Endothelial cell of umbilical vein (primary cell): ENCODE measurements at regions of chr19 and their contacts with region 1.

Region 1: DNA sequence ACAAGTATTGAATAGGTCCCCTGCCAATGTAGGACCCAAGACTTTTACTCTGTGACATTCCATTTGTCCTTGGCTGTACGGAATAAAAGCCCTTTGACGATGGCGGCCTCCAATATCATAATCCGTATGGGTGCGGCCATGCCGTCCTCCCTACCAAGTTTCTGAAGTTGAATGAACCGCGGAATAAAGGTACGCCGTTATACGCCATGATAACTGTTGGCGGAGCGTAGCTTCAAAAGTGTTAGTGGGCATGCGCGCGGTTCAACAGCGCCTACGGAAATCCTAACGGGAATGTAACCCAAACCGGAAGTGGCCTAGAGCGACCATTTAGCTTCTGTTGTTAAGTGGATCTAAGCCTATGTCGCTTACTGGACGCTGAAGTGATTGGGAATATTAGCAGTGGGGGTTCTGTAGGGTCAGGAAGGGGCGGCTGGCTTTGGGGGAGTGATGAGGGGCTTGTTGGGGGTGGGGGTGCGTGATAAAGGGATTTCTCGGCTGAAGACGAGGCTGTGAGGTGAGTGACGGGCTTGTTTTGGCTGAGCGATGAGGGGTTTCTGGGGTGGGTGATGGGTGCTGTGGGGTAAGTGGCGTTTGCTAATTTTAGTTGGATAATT is at the start of gene ZNF175:
- DNase-seq: peak; percentile 100
- H3K4me3 ChIP-seq: peak within 1 kb of the TSS; percentile 49 to 85 (median 53)
- H3K27ac ChIP-seq: peak within 1 kb of the TSS; percentile 95
- H3K4me1 ChIP-seq: peaks cover 33% of the 10 kb centered on the region
- H3K27me3 ChIP-seq: peaks cover 6 to 25% of the 10 kb centered on the region in 2 experiments
- CTCF ChIP-seq: no peak
- POLR2A ChIP-seq: peak; percentile 58
- total RNA-seq, gene ZNF175: 16.5 and 21.4 TPM in 2 replicates

Region 2: DNA sequence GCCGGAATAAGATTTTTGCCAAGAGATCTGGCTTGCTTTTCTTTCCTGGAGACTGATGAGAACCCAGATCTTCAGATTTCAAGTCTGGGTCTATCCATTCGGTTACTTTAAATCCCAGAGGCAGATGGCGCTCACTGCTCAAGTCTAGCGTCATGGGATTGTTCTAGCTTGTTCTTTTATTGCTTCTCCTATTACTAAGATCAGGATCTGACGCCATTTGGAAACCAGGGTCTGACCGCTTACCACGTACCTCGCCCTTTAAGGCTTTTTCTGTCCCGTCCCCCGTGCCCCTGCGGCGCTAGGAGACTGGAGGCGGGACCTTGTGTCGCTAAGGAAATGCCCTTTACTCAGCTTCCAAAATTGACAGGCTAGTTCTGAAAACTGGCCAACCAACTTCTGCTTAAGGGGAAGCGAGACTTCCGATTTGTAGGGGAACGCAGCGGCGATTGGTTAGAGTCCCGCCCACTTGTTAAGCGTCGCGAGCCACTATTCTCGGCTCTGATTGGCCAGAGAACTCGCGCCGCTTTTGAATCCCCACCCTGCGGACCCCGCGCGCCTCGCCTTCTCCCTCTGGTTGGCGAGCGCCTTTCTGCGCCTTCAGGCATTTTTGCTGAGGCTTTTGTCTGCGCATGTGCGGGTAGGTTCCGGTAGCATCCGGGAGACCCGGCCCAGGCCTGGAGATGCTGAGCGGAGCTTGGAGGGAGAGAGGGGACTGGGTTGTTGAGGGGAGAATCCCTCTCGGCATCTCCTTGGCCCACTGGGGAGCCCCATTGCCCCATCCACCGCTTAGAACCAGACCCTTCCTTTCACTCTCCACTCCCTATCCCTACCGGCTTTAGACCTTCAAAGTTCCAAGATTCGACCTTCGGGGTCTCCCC is 176.9 kb before region 1 on chr19:
- CTCF ChIA-PET with region 1: no interaction called
- POLR2A ChIA-PET with region 1: no interaction called
- dilution Hi-C with region 1: no loop called
- intact Hi-C with region 1: loop called (anchors 1 kb)
- DNase-seq: peak; percentile 91
- H3K4me3 ChIP-seq: peak overlapping the region in 2 of 3 experiments; percentile 25 to 40
- H3K27ac ChIP-seq: peak overlapping the region; percentile 28
- H3K4me1 ChIP-seq: peaks cover 8% of the 10 kb centered on the region
- H3K27me3 ChIP-seq: no peaks in the 10 kb centered on the region
- CTCF ChIP-seq: no peak
- POLR2A ChIP-seq: peak; percentile 27

Region 3: DNA sequence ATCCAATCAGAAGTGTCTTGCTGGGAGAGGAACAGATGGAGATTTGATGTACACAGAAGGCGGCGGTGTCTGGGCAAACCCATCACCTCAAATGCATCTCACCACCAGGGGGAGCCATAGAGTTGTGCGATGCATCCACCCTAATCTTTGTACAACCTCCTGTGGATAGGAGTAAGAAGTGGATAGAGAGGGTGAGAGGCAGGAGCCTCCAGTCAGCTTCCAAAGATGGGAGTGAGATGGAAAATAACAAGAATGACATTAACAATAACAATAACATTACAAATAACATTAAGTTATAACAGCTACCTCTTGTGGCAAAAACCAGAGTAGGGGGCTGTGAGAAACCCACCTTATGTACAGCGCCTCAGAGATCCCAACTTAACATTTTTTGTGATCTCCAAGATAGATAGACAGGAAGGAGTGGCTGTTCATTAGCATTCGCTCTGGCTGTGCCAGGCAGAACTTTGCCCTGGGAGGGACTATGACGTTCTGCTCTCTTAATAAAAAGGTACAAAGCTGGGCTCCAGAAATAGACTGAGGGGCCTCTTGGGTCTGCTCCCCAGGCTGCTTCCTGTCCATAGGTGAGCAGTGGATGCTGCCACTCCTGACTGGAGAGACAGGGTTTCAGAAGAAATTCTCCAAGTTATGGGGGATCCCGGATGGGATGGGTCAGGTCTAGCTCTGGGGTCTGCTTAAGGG is 97.9 kb before region 1 on chr19:
- CTCF ChIA-PET with region 1: interaction called, 6 read pairs
- POLR2A ChIA-PET with region 1: no interaction called
- dilution Hi-C with region 1: no loop called
- intact Hi-C with region 1: loop called (anchors 1 kb)
- DNase-seq: peak; percentile 61
- H3K4me3 ChIP-seq: no peak overlapping the region
- H3K27ac ChIP-seq: no peak overlapping the region
- H3K4me1 ChIP-seq: peaks cover 4% of the 10 kb centered on the region
- H3K27me3 ChIP-seq: no peaks in the 10 kb centered on the region
- CTCF ChIP-seq: peak; percentile 73 to 83
- POLR2A ChIP-seq: no peak

Region 4: GRCh38 chr19:51593969-51594773 is 23.1 kb after region 1 on chr19:
- CTCF ChIA-PET with region 1: no interaction called
- POLR2A ChIA-PET with region 1: interaction called, 4 read pairs
- dilution Hi-C with region 1: no loop called
- intact Hi-C with region 1: loop called (anchors 1 kb)
- DNase-seq: peak; percentile 97
- H3K4me3 ChIP-seq: peak overlapping the region; percentile 16 to 53 (median 51)
- H3K27ac ChIP-seq: no peak overlapping the region
- H3K4me1 ChIP-seq: peaks cover 6% of the 10 kb centered on the region
- H3K27me3 ChIP-seq: no peaks in the 10 kb centered on the region
- CTCF ChIP-seq: no peak
- POLR2A ChIP-seq: no peak

Region 5: GRCh38 chr19:51688672-51689571 is 117.9 kb after region 1 on chr19:
- CTCF ChIA-PET with region 1: no interaction called
- POLR2A ChIA-PET with region 1: no interaction called
- dilution Hi-C with region 1: no loop called
- intact Hi-C with region 1: loop called (anchors 10 kb)
- DNase-seq: peak; percentile 92
- H3K4me3 ChIP-seq: peak overlapping the region; percentile 73 to 94 (median 91)
- H3K27ac ChIP-seq: peak overlapping the region; percentile 59
- H3K4me1 ChIP-seq: peaks cover 24% of the 10 kb centered on the region
- H3K27me3 ChIP-seq: no peaks in the 10 kb centered on the region
- CTCF ChIP-seq: peak in 1 of 2 donors; percentile 3
- POLR2A ChIP-seq: no peak